ENCODE measurements at regions of chr12 and their contacts with region 1.

Region 1: GRCh38 chr12:188910-189621 is 24.9 kb downstream of the SLC6A12 start:
- DNase-seq: peak; percentile 96
- H3K4me3 ChIP-seq: peak overlapping the region; percentile 43 to 56
- H3K27ac ChIP-seq: no peak overlapping the region
- H3K4me1 ChIP-seq: peaks cover 0 to 22% of the 10 kb centered on the region in 2 experiments; a peak in 1 of 4 replicates
- H3K27me3 ChIP-seq: peaks cover 5% of the 10 kb centered on the region
- CTCF ChIP-seq: peak; percentile 74
- EP300 ChIP-seq: no peak
- RAD21 ChIP-seq: peak; percentile 60

Region 2: DNA sequence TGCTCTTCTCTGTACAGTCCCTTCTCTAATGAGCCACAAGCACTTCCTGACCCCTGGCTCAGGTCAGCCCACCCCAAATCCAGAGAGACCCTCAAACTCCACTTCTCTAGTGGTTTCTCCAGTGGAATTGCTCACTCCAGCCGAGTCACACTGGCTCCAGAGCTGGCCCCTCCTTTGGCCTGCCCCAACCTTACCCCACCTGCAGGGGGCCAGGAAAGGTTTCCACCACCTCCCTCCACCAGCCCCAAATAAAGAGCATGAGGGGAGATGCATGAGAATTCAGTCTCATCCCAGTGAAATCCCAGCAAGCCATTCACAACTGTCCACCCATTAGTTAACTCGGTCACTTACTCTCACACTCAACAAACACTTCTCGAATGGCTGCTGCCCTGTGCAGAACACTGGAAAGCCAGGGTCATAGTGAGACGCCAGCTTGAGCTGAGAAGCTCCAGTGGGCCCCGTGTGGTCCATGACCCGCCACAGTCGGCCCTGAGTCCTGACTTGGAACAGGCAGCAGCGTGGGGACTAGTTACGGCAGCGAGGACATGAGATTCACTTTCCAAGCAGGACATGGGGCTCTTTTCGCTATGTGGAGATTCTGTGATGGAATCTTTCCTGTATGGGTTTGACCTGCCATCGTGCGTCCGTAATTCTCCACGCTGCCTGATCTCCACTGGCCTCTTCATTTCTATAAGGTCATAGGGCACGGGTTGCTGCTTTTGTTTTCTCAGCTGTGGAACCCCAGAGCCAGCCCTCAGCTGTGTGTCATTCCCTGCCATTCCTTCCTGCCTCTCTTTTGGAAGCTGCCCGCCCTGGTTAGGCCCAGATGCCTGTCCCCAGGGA is 19.3 kb before region 1 on chr12:
- CTCF ChIA-PET with region 1: interaction called, 22 read pairs
- POLR2A ChIA-PET with region 1: no interaction called
- DNase-seq: no peak
- H3K4me3 ChIP-seq: no peak overlapping the region
- H3K27ac ChIP-seq: no peak overlapping the region
- H3K4me1 ChIP-seq: peaks cover 0 to 48% of the 10 kb centered on the region in 2 experiments; a peak in 2 of 4 replicates
- H3K27me3 ChIP-seq: no peaks in the 10 kb centered on the region
- CTCF ChIP-seq: peak; percentile 35; the same call in 1 of the 2 replicates
- EP300 ChIP-seq: no peak
- RAD21 ChIP-seq: no peak

Region 3: GRCh38 chr12:176321-177181 is 12.5 kb before region 1 on chr12:
- CTCF ChIA-PET with region 1: interaction called, 38 read pairs
- POLR2A ChIA-PET with region 1: no interaction called
- DNase-seq: peak; percentile 75
- H3K4me3 ChIP-seq: no peak overlapping the region
- H3K27ac ChIP-seq: peak overlapping the region; percentile 75 to 92
- H3K4me1 ChIP-seq: peaks cover 14 to 87% of the 10 kb centered on the region in 2 experiments
- H3K27me3 ChIP-seq: no peaks in the 10 kb centered on the region
- CTCF ChIP-seq: no peak
- EP300 ChIP-seq: peak in 1 of 2 experiments; percentile 35; a peak in 2 of 4 replicates
- RAD21 ChIP-seq: no peak

Region 4: GRCh38 chr12:203462-204260 is 14.6 kb after region 1 on chr12:
- CTCF ChIA-PET with region 1: interaction called, 43 read pairs
- POLR2A ChIA-PET with region 1: interaction called, 4 read pairs
- DNase-seq: peak; percentile 93
- H3K4me3 ChIP-seq: peak overlapping the region; percentile 39 to 48
- H3K27ac ChIP-seq: no peak overlapping the region
- H3K4me1 ChIP-seq: peaks cover 0 to 17% of the 10 kb centered on the region in 2 experiments; a peak in 2 of 4 replicates
- H3K27me3 ChIP-seq: peaks cover 28% of the 10 kb centered on the region; the same call in 1 of the 2 replicates
- CTCF ChIP-seq: no peak; the same call in 1 of the 2 replicates
- EP300 ChIP-seq: no peak
- RAD21 ChIP-seq: no peak

Measured in SK-N-SH (cell line).